ENCODE measurements at regions of chr20 and their contacts with region 1.

Region 1: DNA sequence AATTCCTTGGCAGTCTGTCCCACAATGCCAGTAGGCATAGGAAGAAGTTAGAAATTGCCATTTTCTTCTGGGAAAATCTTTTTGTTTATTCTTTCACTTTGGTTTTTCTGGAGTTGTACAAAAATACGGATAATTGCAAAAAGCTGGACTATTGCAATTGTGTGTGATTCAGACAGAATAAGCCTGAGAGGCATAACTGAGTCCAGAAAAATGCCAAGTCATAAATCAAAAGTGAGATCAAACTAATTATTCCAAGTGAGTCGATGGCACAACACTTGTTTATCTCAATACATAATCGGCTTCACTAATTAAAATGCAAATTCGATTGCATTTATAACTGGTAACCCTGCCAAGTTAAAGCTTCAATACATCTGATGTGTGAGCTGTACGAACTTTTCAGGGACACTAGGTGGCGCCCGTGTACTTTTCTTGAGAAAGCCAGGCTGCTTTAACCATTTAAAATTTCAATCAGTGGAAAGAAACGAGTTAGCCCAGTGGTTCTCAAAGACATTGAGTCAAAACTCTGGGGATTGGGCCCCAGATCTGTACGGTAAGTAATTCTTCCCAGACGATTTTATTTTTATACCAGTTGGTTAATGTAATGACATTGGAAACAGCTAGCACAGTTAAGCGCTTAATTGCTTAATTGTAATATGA is 102.6 kb downstream of the LAMP5 start:
- DNase-seq: peak; percentile 66
- H3K4me3 Mint-ChIP-seq: no peak overlapping the region
- H3K27ac Mint-ChIP-seq: no peak overlapping the region
- H3K4me1 Mint-ChIP-seq: no peaks in the 10 kb centered on the region
- H3K27me3 Mint-ChIP-seq: peaks cover 27% of the 10 kb centered on the region

Region 2: DNA sequence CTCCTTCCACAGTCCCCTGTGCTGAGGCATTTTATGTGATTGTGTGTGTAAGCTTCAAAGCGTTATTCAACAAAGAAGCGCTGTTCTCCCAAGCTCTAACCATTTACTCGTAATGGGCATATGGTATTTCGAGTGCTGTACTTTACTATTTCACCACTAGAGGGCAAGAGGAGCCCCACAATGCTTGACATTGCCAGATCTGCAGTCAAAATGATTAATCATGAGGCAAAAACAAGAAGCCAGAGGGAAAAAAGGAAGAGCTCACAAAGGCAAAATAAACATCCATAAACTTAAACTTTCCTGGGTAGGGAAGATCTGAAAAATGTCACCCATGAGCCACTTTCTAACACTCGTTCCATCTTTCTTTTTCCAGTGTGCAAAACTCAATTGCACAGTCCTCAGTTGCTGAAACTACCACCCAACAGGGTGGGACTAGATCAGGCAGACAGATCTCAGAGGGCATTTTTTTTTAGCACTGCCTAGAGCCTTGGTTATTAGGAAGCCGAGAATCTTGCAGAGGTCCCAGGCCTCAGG is 763.1 kb before region 1 on chr20:
- CTCF ChIA-PET with region 1: no interaction called
- intact Hi-C with region 1: loop called (anchors 10 kb)
- DNase-seq: peak; percentile 6
- H3K4me3 Mint-ChIP-seq: no peak overlapping the region
- H3K27ac Mint-ChIP-seq: no peak overlapping the region
- H3K4me1 Mint-ChIP-seq: no peaks in the 10 kb centered on the region
- H3K27me3 Mint-ChIP-seq: no peaks in the 10 kb centered on the region

Region 3: DNA sequence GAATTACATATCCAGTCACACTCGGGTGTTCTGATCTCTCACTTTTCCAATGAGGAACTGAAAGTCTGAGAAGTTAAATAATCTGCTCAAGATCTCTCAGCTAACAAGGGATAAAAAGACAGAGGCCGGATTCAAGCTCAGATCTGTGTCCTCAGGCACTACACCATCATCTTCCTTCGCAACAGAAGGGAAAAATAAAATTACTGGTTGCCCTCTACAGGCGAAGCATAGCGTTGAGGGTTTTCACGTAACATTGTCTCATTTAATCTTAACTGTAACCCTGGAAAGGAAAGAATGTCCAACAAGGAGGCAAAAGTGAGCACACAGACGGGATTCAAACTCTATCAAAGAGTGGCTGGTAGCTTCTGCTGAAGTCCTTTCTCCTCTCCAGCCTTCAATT is 350.0 kb after region 1 on chr20:
- CTCF ChIA-PET with region 1: interaction called, 3 read pairs
- intact Hi-C with region 1: loop called (anchors 2 kb)
- DNase-seq: no peak
- H3K4me3 Mint-ChIP-seq: no peak overlapping the region
- H3K27ac Mint-ChIP-seq: no peak overlapping the region
- H3K4me1 Mint-ChIP-seq: no peaks in the 10 kb centered on the region
- H3K27me3 Mint-ChIP-seq: peaks cover 10% of the 10 kb centered on the region

Region 4: DNA sequence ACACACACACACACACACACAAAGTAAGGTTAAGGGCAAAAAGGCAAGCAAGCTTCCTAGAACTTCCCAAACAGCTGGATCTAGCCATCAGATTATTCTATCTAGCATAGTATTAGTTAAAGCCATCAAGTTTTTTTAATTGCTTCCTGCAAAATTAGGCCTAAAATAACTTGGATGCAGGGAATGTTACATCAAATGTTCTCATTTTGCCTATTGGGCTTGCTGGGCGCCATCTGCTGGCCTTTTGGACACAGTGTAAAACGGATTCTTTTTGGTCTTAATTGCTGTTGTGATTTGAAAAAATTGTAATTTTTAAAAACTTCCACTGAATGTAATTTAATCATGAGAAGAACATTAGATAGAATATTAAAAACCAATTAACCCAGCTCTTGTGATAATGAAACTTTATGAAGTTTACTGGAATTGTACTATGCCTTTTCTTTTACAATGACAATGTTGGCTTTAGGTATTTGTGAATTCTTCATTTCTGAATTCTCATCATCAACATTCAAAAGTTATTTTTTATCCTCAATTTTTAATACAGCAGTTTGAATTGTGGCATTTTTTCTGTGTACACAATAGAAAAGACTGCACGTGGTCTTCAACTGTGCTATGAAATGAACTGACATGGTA is 810.2 kb after region 1 on chr20:
- CTCF ChIA-PET with region 1: no interaction called
- intact Hi-C with region 1: loop called (anchors 5 kb)
- DNase-seq: peak; percentile 63
- H3K4me3 Mint-ChIP-seq: no peak overlapping the region
- H3K27ac Mint-ChIP-seq: no peak overlapping the region
- H3K4me1 Mint-ChIP-seq: peaks cover 44% of the 10 kb centered on the region
- H3K27me3 Mint-ChIP-seq: no peaks in the 10 kb centered on the region

Region 5: DNA sequence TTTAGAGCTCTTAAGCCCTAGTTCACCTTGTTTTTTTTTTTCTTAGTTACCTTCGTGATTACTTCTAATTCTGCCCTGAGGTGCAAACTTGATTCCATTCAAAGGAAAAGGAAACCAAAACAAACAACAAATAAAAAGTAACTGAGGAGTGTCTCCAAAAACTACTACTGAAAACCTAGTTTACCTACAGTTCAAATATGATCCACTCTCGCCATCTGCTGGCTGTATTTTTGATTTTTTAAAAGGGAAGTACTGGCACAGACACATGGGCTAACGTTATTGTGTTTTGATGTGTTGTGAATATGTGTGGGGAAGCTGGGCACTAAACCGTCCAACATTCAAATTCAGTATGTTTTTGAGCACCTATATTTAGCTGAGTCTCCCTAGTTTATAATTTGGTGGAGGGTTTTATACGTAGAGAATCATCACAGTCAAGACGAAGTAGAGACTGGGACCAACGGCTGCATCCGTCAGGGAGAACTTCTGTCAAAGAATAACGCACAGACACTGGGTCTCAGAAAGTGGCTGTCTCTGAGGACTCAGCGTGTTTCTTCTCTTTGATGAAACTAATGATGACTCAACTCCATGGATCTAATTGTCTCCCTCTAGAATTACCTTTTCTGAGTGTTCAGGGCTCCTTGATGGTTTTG is 1927.2 kb after region 1 on chr20:
- CTCF ChIA-PET with region 1: no interaction called
- intact Hi-C with region 1: loop called (anchors 2 kb)
- DNase-seq: peak; percentile 35
- H3K4me3 Mint-ChIP-seq: no peak overlapping the region
- H3K27ac Mint-ChIP-seq: no peak overlapping the region
- H3K4me1 Mint-ChIP-seq: no peaks in the 10 kb centered on the region
- H3K27me3 Mint-ChIP-seq: peaks cover 4% of the 10 kb centered on the region

Measured in activated naive CD4-positive, alpha-beta T cell treated with anti-CD3 and anti-CD28 coated beads for 36 hours (primary cell).